ENCODE measurements at regions of chr15 and their contacts with region 1.

Region 1: DNA sequence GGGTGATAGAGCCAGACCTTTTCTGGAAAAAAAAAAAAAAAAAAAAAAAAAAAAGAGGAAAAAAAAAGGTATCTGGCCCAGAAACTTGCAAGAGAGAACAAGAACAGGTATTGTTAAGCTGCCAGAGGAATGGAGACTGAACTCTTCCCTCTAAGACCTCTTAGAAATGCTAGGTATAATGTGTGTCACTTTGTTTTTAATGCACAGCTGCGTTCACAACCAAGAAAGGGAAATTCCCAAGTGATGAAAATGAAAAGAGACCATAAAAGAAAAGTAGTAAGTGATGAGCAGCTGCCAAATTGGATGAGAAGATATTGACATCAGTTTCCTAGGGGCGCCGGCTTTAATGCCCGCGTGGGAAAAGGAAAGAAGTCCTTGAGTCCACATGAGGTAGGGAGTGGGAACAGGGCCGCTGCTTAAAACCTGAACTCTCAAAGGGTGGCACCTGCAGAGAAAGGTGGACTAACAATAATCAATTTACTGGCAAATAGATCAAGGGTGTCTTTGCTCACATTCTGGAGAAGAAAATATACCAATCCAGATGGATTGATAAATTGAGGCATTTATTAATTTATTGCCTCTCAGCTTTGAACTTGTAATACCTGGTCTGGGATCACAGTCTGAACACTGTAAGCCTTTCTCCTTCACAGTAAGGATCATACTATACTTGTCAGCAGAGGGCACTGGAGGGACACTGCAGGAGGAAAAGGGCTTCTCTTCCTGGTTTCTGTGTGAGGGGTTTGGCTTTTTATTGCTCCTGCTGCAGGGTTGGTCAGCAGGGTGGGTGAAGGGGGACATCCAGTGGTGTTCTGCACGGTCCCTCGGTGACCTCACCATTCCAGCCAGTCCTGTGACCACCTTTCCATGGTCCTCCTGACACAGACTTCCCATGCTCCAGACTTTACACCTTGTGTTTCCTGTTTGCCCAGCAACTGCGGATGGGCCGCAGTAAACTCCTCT is 131.6 kb downstream of the AQP9 start:
- DNase-seq: peak in 1 of 2 donors; percentile 68
- ATAC-seq: peak; percentile 80 to 97 (median 91)
- H3K4me3 ChIP-seq: no peak overlapping the region
- H3K4me3 Mint-ChIP-seq: no peak overlapping the region
- H3K27ac ChIP-seq: no peak overlapping the region
- H3K27ac Mint-ChIP-seq: peak overlapping the region; percentile 50 to 75
- H3K4me1 ChIP-seq: peaks cover 8% of the 10 kb centered on the region
- H3K4me1 Mint-ChIP-seq: peaks cover 11 to 13% of the 10 kb centered on the region in 2 donors
- H3K27me3 ChIP-seq: no peaks in the 10 kb centered on the region
- H3K27me3 Mint-ChIP-seq: peaks cover 2 to 8% of the 10 kb centered on the region in 2 donors
- CTCF ChIP-seq: peak; percentile 76

Region 2: DNA sequence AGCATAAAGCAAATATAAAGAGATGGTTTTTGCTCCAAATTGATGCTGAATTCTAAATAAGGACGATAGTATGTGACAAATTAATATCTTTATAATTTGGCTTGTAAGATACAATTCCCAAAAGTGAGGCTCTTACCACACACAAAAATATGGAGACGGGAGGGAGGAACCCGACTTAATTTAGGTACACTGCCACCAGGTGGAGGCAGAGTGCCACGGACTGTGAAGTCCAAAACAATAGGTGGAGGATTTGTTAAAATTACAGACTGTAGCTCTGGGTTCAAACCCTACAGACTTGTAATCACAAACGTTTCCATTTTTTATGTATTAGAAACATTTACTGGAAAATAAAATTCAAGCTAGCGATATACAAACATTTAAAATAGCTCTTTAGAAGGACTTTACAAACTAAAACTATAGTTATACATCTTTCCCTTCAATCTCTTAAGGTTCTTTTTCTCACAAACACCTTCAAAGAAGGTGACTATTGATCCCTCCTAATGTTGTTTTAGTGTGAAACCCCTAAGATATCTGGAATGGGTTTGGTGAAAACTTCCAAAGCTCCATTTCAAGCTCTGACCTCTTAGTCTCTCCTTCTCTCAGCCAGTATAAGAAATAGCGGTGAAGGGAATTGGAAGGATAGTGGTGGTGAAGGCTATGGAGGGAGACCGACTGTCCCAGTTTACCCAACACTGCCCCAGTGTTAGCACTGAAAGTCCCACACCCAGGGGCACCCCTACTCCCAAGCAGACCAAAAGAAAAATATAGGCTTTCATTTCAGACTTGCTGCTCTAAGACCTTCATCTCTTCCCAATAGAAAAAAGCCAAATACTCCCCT is 41.8 kb before region 1 on chr15:
- intact Hi-C with region 1: no loop called
- DNase-seq: peak; percentile 56 to 83
- ATAC-seq: peak; percentile 67 to 75 (median 67)
- H3K4me3 ChIP-seq: no peak overlapping the region
- H3K4me3 Mint-ChIP-seq: no peak overlapping the region
- H3K27ac ChIP-seq: no peak overlapping the region
- H3K27ac Mint-ChIP-seq: no peak overlapping the region
- H3K4me1 ChIP-seq: no peaks in the 10 kb centered on the region
- H3K4me1 Mint-ChIP-seq: no peaks in the 10 kb centered on the region
- H3K27me3 ChIP-seq: peaks cover 2% of the 10 kb centered on the region
- H3K27me3 Mint-ChIP-seq: peaks cover 14 to 35% of the 10 kb centered on the region in 2 donors
- CTCF ChIP-seq: peak; percentile 91

Region 3: GRCh38 chr15:58369261-58369701 is 99.5 kb after region 1 on chr15:
- intact Hi-C with region 1: loop called (anchors 10 kb)
- DNase-seq: peak; percentile 43 to 54
- ATAC-seq: peak; percentile 98 to 100 (median 99)
- H3K4me3 ChIP-seq: no peak overlapping the region
- H3K4me3 Mint-ChIP-seq: peak overlapping the region; percentile 32
- H3K27ac ChIP-seq: no peak overlapping the region
- H3K27ac Mint-ChIP-seq: peak overlapping the region; percentile 27 to 87
- H3K4me1 ChIP-seq: peaks cover 5% of the 10 kb centered on the region
- H3K4me1 Mint-ChIP-seq: peaks cover 14 to 18% of the 10 kb centered on the region in 2 donors
- H3K27me3 ChIP-seq: no peaks in the 10 kb centered on the region
- H3K27me3 Mint-ChIP-seq: no peaks in the 10 kb centered on the region
- CTCF ChIP-seq: no peak

Region 4: DNA sequence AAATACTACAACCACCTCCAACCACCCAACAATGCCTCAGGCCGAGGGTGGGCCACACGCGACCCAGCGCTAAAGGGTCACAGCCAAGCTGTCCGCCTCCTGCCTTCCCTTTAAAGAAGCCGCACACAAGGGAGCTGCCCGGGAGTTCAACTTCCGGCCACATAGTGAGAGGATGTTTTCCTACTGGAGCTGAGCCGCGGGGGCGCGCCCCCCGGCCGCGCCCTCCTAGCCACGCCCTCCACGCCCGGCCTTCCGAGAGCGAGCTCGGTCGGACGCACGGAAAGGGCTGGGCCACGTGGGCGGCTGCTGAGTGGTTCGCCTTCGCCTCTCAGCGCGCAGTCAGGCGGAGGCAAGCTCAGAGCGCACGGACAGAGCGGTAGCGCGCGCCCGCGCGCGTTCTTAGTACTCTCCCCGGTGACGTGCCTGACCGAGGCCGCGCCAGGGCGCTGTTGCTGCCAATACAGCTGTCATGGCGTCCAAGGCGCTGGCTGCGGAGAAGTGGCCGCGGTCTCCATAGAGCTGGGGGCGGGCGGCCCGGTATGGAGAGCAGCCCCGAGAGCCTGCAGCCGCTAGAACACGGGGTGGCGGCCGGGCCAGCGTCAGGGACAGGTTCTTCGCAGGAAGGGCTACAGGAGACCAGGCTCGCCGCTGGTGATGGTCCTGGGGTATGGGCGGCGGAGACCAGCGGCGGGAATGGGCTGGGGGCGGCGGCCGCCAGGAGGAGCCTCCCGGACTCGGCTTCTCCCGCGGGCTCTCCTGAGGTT is 501.3 kb after region 1 on chr15 and contains the start of gene MINDY2:
- intact Hi-C with region 1: loop called (anchors 5 kb)
- DNase-seq: peak; percentile 89 to 97
- ATAC-seq: peak; percentile 92 to 99 (median 94)
- H3K4me3 ChIP-seq: peak within 1 kb of the TSS; percentile 99
- H3K4me3 Mint-ChIP-seq: no peak within 1 kb of the TSS
- H3K27ac ChIP-seq: peak within 1 kb of the TSS; percentile 92
- H3K27ac Mint-ChIP-seq: peak within 1 kb of the TSS; percentile 87 to 96
- H3K4me1 ChIP-seq: peaks cover 16% of the 10 kb centered on the region
- H3K4me1 Mint-ChIP-seq: peaks cover 10 to 14% of the 10 kb centered on the region in 2 donors
- H3K27me3 ChIP-seq: no peaks in the 10 kb centered on the region
- H3K27me3 Mint-ChIP-seq: no peaks in the 10 kb centered on the region
- CTCF ChIP-seq: no peak
- total RNA-seq, gene MINDY2: 16.3 to 18.7 (median 18.3) TPM